Posterior cingulate gyrus (tissue), 11 donors: ENCODE measurements at regions of chr14 and their contacts with region 1.

Region 1: DNA sequence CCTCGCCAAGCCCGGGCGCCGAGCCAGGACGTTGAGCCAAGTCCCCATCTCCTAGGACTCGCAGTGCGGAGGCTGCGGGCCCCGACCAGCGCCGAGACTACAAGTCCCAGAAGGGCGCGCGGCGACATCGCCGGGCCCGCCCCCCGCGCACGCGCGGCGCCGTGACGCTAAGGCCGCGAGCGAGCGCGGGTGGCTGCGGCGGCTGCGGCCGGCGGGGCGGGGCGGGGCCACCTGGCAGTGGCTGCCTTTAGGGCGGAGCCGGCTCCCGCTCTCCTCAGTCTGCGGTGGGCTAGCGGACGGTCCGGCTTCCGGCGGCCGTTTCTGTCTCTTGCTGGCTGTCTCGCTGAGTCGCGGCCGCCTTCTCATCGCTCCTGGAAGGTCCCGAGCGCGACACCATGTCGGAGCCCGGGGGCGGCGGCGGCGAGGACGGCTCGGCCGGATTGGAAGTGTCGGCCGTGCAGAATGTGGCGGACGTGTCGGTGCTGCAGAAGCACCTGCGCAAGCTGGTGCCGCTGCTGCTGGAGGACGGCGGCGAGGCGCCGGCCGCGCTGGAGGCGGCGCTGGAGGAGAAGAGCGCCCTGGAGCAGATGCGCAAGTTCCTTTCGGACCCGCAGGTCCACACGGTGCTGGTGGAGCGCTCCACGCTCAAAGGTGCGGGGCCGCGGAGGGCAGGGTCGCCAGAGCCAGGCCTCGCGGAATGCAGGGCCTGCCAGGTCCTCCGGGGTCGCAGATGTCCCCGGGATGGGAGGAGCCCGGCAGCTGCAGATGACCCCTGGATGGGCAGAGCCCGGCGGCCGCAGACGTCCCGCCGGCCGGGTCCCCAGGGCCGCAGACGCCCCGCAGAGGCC is at the start of gene DYNC1H1:
- DNase-seq: peak; percentile 85 to 99 (median 94)

Region 2: GRCh38 chr14:101371799-101372793 is 592.4 kb before region 1 on chr14:
- intact Hi-C with region 1: no loop called
- DNase-seq: peak in 1 of 10 donors; percentile 72

Region 3: GRCh38 chr14:101947906-101948665 is 16.4 kb before region 1 on chr14:
- intact Hi-C with region 1: loop called (anchors 1 kb)
- DNase-seq: peak; percentile 97 to 100 (median 100)